HCT116 (cell line): ENCODE measurements at regions of chr1 and their contacts with region 1.

Region 1: GRCh38 chr1:23496490-23497181 is 12.7 kb upstream of the ASAP3 start:
- DNase-seq: no peak
- ATAC-seq: peak; percentile 49
- H3K4me3 ChIP-seq: no peak overlapping the region
- H3K27ac ChIP-seq: 0 out of 2 replicates have a peak overlapping the region, but pooled peaks have one; percentile 10
- H3K4me1 ChIP-seq: peaks cover 0 to 3% of the 10 kb centered on the region in 2 experiments; a peak in 1 of 4 replicates
- H3K27me3 ChIP-seq: no peaks in the 10 kb centered on the region
- CTCF ChIP-seq: no peak
- POLR2A ChIP-seq: no peak
- RAD21 ChIP-seq: no peak

Region 2: GRCh38 chr1:23484253-23485001 is 12.2 kb before region 1 on chr1:
- CTCF ChIA-PET with region 1: interaction called, 48 read pairs
- POLR2A ChIA-PET with region 1: interaction called, 4 read pairs
- RAD21 ChIA-PET with region 1: interaction called in 1 of 2 experiments, 6 read pairs
- intact Hi-C with region 1: no loop called
- DNase-seq: peak; percentile 69
- ATAC-seq: peak; percentile 91
- H3K4me3 ChIP-seq: peak overlapping the region; percentile 42 to 71
- H3K27ac ChIP-seq: peak overlapping the region; percentile 39; the same call in 1 of the 2 replicates
- H3K4me1 ChIP-seq: peaks cover 14 to 19% of the 10 kb centered on the region in 2 experiments; a peak in 3 of 4 replicates
- H3K27me3 ChIP-seq: no peaks in the 10 kb centered on the region
- CTCF ChIP-seq: no peak
- POLR2A ChIP-seq: no peak
- RAD21 ChIP-seq: no peak

Region 3: DNA sequence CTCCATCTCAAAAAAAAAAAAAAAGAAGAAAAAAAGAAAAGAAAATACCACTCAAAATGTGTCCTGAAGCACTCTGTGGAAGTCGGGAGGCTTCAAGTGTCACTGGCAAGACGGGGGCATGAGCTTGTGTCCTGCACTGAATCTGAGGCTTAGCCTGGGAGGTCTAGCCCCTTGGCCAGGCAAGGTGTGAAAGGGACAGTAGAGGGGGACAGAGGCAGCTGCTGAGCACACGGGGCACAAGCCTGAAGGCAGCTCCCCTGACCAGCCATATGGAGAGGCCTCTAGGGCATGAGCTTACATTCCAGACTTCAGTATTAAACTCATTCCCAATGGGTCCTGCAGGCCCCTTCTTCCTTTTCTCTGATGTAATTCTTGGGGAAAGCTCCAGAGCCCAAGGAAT is 10.9 kb after region 1 on chr1:
- CTCF ChIA-PET with region 1: interaction called, 19 read pairs
- POLR2A ChIA-PET with region 1: interaction called, 3 read pairs
- RAD21 ChIA-PET with region 1: no interaction called
- intact Hi-C with region 1: no loop called
- DNase-seq: no peak
- ATAC-seq: no peak
- H3K4me3 ChIP-seq: no peak overlapping the region
- H3K27ac ChIP-seq: no peak overlapping the region
- H3K4me1 ChIP-seq: no peaks in the 10 kb centered on the region
- H3K27me3 ChIP-seq: no peaks in the 10 kb centered on the region
- CTCF ChIP-seq: no peak
- POLR2A ChIP-seq: no peak
- RAD21 ChIP-seq: no peak

Region 4: DNA sequence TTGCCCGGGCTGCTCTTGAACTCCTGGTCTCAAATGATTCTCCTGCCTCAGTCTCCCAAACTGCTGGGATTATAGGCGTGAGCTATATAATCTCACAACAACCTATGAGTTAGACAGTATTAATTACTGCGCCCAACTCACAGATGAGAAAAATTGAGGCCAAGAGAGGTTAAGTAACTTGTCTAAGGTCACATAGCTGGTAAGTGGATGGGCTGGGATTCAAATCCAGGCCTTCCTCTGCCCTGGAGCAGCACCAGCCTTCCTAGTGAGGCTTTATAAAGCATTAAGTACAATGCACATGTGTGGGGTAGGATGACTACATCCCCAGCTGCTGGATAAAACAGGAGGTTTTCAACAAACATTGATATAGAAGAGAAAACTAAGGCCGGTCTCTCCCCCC is 19.3 kb after region 1 on chr1:
- CTCF ChIA-PET with region 1: interaction called, 10 read pairs
- POLR2A ChIA-PET with region 1: no interaction called
- RAD21 ChIA-PET with region 1: no interaction called
- intact Hi-C with region 1: no loop called
- DNase-seq: no peak
- ATAC-seq: no peak
- H3K4me3 ChIP-seq: no peak overlapping the region
- H3K27ac ChIP-seq: no peak overlapping the region
- H3K4me1 ChIP-seq: no peaks in the 10 kb centered on the region
- H3K27me3 ChIP-seq: no peaks in the 10 kb centered on the region
- CTCF ChIP-seq: no peak
- POLR2A ChIP-seq: no peak
- RAD21 ChIP-seq: no peak

Region 5: GRCh38 chr1:23530747-23531561 is 34.3 kb after region 1 on chr1 and contains the start of gene E2F2:
- CTCF ChIA-PET with region 1: interaction called, 48 read pairs
- POLR2A ChIA-PET with region 1: interaction called, 7 read pairs
- RAD21 ChIA-PET with region 1: interaction called, 6 to 7 read pairs
- intact Hi-C with region 1: no loop called
- DNase-seq: peak; percentile 81
- ATAC-seq: peak; percentile 54
- H3K4me3 ChIP-seq: peak within 1 kb of the TSS; percentile 69 to 84
- H3K27ac ChIP-seq: peak within 1 kb of the TSS; percentile 80
- H3K4me1 ChIP-seq: peaks cover 59 to 96% of the 10 kb centered on the region in 2 experiments
- H3K27me3 ChIP-seq: no peaks in the 10 kb centered on the region
- CTCF ChIP-seq: peak in 2 of 3 experiments; percentile 3 to 19; a peak in 1 of 6 replicates
- POLR2A ChIP-seq: peak; percentile 38
- RAD21 ChIP-seq: no peak
- total RNA-seq, gene E2F2: 16.3 TPM